HepG2 (cell line): ENCODE measurements at regions of chr4 and their contacts with region 1.

Region 1: DNA sequence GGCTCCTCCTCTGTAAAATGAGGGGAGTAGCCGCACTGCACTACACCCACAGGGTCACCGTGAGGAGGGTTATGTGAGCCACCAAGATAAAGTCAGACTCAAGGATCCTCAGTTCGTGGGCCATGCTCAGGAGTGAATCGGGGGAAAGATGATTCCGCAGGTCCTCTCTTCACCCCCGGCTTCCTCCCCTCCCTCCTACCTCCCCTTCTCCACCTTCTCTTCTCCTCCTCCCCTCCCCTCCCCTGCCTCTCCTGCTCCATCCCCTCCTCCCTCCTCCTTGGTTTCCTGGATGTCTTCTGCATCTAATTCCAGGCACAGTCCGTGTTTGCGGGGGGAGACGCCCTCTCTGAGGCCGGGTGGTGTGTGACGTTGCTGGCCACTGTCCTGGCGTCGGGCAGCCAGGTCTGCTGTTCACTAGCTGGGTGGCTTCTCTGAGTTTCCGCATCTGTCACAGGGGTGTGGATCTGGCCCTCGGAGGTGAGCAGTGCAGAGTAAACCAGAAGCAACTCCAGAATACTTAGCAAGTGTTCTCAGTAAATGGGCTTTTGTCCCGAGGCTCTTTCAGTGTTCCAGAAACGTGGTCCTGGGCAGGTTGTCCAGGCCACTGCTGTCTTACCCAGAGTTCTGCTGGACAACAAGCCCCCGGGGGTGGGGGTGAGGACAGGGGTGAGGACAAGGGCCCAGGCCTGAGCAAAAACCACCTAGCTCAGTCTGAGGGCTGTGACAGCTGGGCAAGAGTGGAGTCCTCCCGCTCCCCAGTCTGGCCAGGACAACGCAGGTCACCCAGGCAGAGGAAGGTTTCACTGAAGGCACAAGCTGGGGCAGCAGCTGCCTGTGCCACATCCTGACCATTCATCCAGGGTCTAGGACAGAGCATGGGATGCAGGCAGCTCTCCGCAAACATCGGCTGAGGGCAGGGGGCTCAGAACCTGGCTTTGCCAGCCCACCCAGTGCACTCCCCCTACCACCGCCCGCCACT is 92.4 kb downstream of the PPP2R2C start:
- DNase-seq: no peak
- ATAC-seq: no peak
- H3K4me3 ChIP-seq: no peak overlapping the region
- H3K27ac ChIP-seq: no peak overlapping the region
- H3K4me1 ChIP-seq: no peaks in the 10 kb centered on the region
- H3K27me3 ChIP-seq: peaks cover 9 to 86% of the 10 kb centered on the region in 2 experiments
- CTCF ChIP-seq: no peak
- EP300 ChIP-seq: no peak
- POLR2A ChIP-seq: no peak
- RAD21 ChIP-seq: no peak

Region 2: GRCh38 chr4:6250235-6250983 is 129.6 kb before region 1 on chr4:
- CTCF ChIA-PET with region 1: no interaction called
- POLR2A ChIA-PET with region 1: no interaction called
- in situ Hi-C with region 1: no loop called
- intact Hi-C with region 1: loop called (anchors 2 kb)
- DNase-seq: peak; percentile 67
- ATAC-seq: peak; percentile 54
- H3K4me3 ChIP-seq: no peak overlapping the region
- H3K27ac ChIP-seq: no peak overlapping the region
- H3K4me1 ChIP-seq: no peaks in the 10 kb centered on the region
- H3K27me3 ChIP-seq: peaks cover 2 to 40% of the 10 kb centered on the region in 2 experiments; a peak in 2 of 5 replicates
- CTCF ChIP-seq: peak; percentile 76
- EP300 ChIP-seq: no peak
- POLR2A ChIP-seq: no peak
- RAD21 ChIP-seq: peak; percentile 66

Region 3: DNA sequence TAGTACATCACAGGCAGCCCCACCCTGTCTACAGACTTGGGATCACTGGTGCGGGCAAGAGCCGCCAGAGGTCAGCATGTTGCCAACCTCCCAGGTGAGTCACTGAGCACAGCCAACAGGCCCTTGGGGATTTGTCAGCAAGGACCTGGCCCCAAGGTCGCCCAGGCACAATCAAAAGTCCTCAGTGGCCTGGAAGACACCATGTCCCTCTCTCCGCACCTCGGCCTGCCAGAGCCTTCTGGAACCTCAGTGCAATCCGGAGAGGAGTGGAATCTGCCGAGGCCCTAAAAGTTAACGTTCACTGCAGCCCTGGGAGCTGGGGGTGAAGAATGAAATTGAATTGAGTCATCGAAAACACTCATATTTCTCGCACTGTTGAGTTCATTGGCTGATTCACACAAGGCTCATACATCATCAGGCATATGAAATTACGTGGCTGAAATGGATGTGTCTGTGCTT is 36.1 kb before region 1 on chr4:
- CTCF ChIA-PET with region 1: no interaction called
- POLR2A ChIA-PET with region 1: no interaction called
- in situ Hi-C with region 1: loop called (anchors 5 kb)
- intact Hi-C with region 1: no loop called
- DNase-seq: peak; percentile 54
- ATAC-seq: peak; percentile 91
- H3K4me3 ChIP-seq: no peak overlapping the region
- H3K27ac ChIP-seq: no peak overlapping the region
- H3K4me1 ChIP-seq: peaks cover 7% of the 10 kb centered on the region; the same call in 1 of the 2 replicates
- H3K27me3 ChIP-seq: peaks cover 11 to 71% of the 10 kb centered on the region in 2 experiments; a peak in 4 of 5 replicates
- CTCF ChIP-seq: peak; percentile 82
- EP300 ChIP-seq: no peak
- POLR2A ChIP-seq: no peak
- RAD21 ChIP-seq: 0 out of 2 replicates have a peak, but pooled peaks have one; percentile 24

Region 4: DNA sequence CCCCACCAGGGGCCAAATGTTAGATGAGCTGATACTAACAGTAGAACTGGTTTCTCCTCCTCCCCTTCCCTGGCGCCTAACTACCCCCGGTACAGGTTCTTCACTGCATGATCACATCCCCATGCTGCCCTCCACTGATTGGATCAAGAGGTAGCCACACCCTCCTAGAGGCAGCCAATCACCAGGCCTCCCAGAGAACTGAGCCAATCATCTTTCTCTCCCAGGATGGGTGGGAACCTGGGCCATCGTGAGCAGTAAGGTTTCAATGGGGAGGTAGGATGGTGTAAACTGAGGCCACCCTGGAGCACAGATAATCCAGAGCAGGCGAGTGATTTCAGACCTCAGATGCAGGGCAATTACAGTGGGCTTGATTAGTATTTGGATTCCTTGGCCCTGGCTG is 28.2 kb after region 1 on chr4:
- CTCF ChIA-PET with region 1: no interaction called
- POLR2A ChIA-PET with region 1: no interaction called
- in situ Hi-C with region 1: no loop called
- intact Hi-C with region 1: no loop called
- DNase-seq: no peak
- ATAC-seq: no peak
- H3K4me3 ChIP-seq: no peak overlapping the region
- H3K27ac ChIP-seq: no peak overlapping the region
- H3K4me1 ChIP-seq: no peaks in the 10 kb centered on the region
- H3K27me3 ChIP-seq: peaks cover 4 to 43% of the 10 kb centered on the region in 2 experiments
- CTCF ChIP-seq: no peak
- EP300 ChIP-seq: no peak
- POLR2A ChIP-seq: no peak
- RAD21 ChIP-seq: no peak